ENCODE measurements at regions of chr14 and their contacts with region 1.

Region 1: DNA sequence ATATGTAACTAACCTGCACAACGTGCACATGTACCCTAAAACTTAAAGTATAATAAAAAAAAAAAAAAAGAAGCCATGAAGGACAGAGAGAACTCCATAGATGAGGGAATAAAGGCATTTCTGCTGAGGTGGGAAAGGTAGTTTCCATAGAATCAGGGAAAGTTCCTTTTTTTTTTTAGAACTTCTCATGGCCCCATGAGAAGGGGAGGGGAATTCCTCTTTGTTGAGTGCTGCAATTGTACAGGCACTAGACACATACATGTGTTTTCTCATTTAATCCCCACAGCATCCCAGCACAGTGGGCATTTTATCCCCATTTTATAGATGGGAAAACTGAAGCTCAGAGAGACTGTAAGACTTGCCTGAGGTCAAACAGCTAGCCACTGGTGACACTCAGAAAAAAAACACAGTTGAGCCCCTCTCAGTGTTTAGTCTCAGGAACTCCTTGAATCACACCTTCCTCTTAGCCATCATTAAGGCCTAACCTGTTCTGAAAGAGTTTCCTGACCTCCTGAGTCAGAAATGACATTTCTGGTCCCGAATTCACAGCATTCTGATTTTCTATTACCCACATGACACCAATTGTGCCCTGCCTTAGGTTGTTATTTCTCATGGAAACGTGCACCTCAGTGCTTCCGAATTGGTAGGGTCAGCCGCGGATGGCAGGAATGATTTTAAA is 189.3 kb upstream of the G2E3 start:
- DNase-seq: no peak
- ATAC-seq: no peak
- H3K4me3 ChIP-seq: no peak overlapping the region
- H3K27ac ChIP-seq: no peak overlapping the region
- H3K4me1 ChIP-seq: no peaks in the 10 kb centered on the region
- H3K27me3 ChIP-seq: peaks cover 0 to 5% (median 0%) of the 10 kb centered on the region in 9 donors
- CTCF ChIP-seq: no peak
- POLR2A ChIP-seq: no peak

Region 2: GRCh38 chr14:30312214-30312613 is 57.4 kb before region 1 on chr14:
- intact Hi-C with region 1: no loop called
- DNase-seq: no peak
- ATAC-seq: no peak
- H3K4me3 ChIP-seq: no peak overlapping the region
- H3K27ac ChIP-seq: no peak overlapping the region
- H3K4me1 ChIP-seq: no peaks in the 10 kb centered on the region
- H3K27me3 ChIP-seq: no peaks in the 10 kb centered on the region
- CTCF ChIP-seq: no peak
- POLR2A ChIP-seq: no peak

Region 3: DNA sequence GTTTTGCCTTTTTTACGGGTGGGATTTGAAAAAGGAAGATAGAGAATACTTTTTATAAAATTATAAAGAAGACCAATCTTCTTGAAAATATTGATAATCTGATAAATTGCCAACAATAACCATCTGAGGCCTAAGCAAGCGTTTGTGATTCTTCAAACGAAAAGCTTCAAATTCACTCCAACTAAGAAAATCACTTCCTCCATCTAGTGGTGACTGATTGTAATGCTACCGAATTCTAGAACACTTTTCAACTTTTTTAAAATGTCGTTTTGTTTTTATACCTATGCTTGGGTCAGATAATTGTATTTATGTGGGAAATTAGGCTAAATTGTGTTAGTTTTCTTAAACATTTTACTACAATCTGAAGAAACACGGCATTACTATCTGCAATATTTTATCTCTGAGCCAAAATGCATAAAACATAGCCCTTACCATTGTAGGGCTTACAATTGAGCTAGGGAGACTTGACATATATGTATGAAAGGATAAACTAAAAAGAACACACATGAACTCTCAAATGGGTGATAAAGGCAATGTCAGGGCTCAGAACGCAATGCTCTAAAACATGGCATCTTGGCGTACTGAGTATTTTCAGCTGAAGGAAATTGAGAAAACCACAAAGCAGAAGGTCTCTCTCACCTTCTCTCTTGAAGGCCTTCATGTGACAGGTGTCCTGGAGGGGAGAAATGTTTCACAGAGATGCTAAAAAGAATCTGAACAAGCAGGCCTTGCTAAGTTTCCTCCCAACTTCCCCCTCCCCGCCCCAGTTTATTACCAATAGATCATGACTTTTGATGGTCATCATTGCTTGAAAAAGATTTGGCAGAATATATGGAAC is 152.5 kb after region 1 on chr14:
- intact Hi-C with region 1: loop called in 4 of 10 experiments (anchors 5 to 10 kb)
- DNase-seq: no peak
- ATAC-seq: no peak
- H3K4me3 ChIP-seq: no peak overlapping the region
- H3K27ac ChIP-seq: no peak overlapping the region
- H3K4me1 ChIP-seq: peaks cover 0 to 10% (median 0%) of the 10 kb centered on the region in 12 donors
- H3K27me3 ChIP-seq: no peaks in the 10 kb centered on the region
- CTCF ChIP-seq: peak; percentile 64 to 85 (median 74)
- POLR2A ChIP-seq: no peak